ENCODE measurements at regions of chr16 and their contacts with region 1.

Region 1: DNA sequence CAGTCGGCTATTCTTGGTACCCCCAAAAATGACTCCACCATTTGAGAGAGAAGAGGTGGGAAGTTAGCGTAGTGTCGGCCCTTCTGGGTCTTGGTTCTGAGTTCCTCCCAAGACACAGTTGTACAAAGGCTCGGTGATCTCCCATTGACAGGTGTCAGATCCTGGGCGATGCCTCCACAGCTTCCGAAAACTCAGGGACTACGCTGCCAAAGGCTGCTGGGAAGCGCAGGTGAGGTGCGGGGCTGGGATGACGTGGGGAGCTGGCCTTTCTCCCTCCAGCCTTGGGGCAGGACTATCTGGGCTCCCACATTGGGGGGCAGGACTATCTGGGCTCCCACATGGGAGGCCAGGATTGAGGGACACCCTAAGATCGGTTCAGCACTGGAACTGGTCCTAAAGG is 10.4 kb downstream of the CCNF start:
- DNase-seq: no peak
- ATAC-seq: no peak
- H3K4me3 Mint-ChIP-seq: no peak overlapping the region
- H3K27ac Mint-ChIP-seq: peak overlapping the region; percentile 17
- H3K4me1 Mint-ChIP-seq: peaks cover 20% of the 10 kb centered on the region
- H3K27me3 Mint-ChIP-seq: no peaks in the 10 kb centered on the region

Region 2: DNA sequence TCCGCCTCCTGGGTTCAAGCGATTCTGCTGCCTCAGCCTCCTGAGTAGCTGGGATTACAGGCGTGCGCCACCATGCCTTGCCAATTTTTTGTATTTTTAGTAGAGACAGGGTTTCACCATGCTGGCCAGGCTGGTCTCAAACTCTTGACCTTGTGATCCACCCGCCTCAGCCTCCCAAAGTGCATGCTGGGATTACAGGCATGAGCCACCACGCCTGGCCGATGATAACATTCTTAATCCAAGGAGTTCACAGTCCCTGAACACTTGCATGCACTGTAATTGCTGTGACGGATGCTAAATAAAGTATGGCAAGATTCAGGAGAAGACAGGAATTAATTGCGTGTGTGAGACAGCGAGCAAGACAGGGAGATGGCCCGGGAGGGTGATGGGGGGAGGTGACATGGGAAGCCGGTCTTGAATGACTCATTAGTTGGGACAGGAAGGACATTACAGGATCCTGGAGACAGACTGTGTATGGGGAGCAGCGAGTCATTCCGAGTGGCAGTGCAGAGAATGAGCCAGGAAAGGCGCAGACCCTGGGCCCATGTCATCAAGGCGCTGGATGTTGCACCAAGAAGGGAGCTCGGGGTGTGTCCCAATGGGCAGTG is 105.7 kb before region 1 on chr16:
- CTCF ChIA-PET with region 1: no interaction called
- DNase-seq: no peak
- ATAC-seq: no peak
- H3K4me3 Mint-ChIP-seq: no peak overlapping the region
- H3K27ac Mint-ChIP-seq: no peak overlapping the region
- H3K4me1 Mint-ChIP-seq: peaks cover 9% of the 10 kb centered on the region
- H3K27me3 Mint-ChIP-seq: peaks cover 16% of the 10 kb centered on the region

Region 3: DNA sequence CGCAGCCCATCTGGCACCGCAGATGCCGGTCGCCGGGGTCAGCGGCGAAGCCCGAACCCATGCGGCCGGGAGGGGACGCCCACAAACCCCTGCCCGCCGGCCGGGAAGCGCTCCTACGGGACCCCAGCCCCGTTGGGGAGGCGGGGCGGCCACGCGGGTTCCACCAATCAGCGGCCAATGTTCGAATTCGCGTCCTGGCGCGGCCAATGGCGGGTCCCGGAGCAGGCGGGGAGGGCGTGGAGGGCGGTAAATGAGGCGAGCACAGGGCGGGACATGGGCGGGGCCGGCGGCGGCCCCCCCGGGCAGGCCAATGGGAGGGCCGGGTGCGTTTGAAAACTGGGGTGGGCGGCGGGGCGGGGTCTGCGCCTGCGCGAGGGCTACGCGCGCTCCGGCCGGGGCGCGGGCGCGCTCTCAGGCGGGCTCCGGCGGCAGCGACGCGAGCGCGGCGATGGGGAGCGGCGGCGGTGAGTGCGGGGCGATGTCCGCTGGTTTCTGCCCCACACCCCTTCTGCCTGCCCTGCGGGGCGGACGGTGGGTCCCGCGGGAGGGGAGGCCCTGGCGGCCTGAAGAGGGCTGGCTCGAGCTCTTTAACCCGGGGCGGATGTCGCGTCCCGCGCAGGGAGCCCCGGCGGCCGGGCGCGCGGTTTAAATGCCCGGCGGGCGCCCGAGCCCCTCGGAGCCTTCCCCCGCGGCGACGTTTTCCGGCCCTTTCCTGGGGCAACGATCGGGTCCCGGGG is 10.4 kb before region 1 on chr16 and contains the start of gene CCNF:
- CTCF ChIA-PET with region 1: interaction called, 13 read pairs
- DNase-seq: peak; percentile 98
- ATAC-seq: peak; percentile 96
- H3K4me3 Mint-ChIP-seq: peak within 1 kb of the TSS; percentile 98
- H3K27ac Mint-ChIP-seq: peak within 1 kb of the TSS; percentile 84
- H3K4me1 Mint-ChIP-seq: peaks cover 33% of the 10 kb centered on the region
- H3K27me3 Mint-ChIP-seq: no peaks in the 10 kb centered on the region
- total RNA-seq, gene CCNF: 84.2 to 103 TPM